ENCODE measurements at regions of chr3 and their contacts with region 1.

Region 1: GRCh38 chr3:5187156-5187919 is at the start of gene EDEM1:
- DNase-seq: peak; percentile 92 to 94
- H3K4me3 ChIP-seq: peak within 1 kb of the TSS; percentile 65 to 100 (median 95)
- H3K27ac ChIP-seq: peak within 1 kb of the TSS; percentile 74 to 97 (median 87)
- H3K4me1 ChIP-seq: peaks cover 19 to 42% of the 10 kb centered on the region in 2 donors
- H3K27me3 ChIP-seq: no peaks in the 10 kb centered on the region
- CTCF ChIP-seq: no peak
- POLR2A ChIP-seq: peak; percentile 23 to 86
- total RNA-seq, gene EDEM1: 26.1 to 58.4 (median 43.0) TPM

Region 2: DNA sequence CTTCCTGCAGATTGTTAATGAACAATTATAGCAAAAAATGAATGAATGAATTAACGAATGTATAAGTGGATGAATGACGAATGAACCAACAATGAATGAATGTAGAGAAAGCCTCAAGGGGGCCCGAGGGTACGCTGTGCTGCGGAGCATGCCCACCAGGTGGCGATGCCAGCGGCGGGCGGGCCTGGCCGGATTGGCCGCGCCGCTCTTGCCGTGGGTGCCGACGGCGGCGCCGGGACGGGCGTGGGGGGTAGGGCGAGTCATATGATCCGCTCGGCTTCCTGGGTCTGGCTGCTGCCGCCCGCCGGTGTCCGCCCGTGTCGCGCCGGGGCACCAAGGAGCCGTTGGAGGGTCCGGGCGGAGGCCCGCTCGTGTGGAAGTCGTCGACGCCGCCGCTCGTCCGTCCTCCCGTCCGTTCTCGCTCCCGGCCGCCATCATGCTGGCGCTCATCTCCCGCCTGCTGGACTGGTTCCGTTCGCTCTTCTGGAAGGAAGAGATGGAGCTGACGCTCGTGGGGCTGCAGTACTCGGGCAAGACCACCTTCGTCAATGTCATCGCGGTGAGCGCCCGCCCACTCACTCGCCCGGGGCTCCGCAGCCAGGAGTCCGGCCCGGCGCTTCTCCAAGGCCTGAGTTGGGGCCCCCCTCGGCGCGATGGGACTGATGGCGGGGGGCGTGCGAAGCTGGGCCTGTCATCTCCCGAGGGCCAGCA is 65.2 kb before region 1 on chr3 and contains the start of gene ARL8B:
- intact Hi-C with region 1: loop called (anchors 5 kb)
- DNase-seq: peak; percentile 89 to 91
- H3K4me3 ChIP-seq: peak within 1 kb of the TSS; percentile 82 to 93 (median 84)
- H3K27ac ChIP-seq: peak within 1 kb of the TSS; percentile 86 to 92 (median 87)
- H3K4me1 ChIP-seq: peaks cover 19 to 20% of the 10 kb centered on the region in 2 donors
- H3K27me3 ChIP-seq: no peaks in the 10 kb centered on the region
- CTCF ChIP-seq: peak; percentile 75 to 99 (median 94)
- POLR2A ChIP-seq: peak; percentile 60 to 84
- total RNA-seq, gene ARL8B: 51.2 to 75.9 (median 65.3) TPM

Region 3: GRCh38 chr3:5479229-5479799 is 292.0 kb after region 1 on chr3:
- intact Hi-C with region 1: no loop called
- DNase-seq: no peak
- H3K4me3 ChIP-seq: no peak overlapping the region
- H3K27ac ChIP-seq: no peak overlapping the region
- H3K4me1 ChIP-seq: no peaks in the 10 kb centered on the region
- H3K27me3 ChIP-seq: no peaks in the 10 kb centered on the region
- CTCF ChIP-seq: no peak
- POLR2A ChIP-seq: no peak

Measured in thyroid gland (tissue), 4 donors.